Panc1 (cell line): ENCODE measurements at regions of chr6 and their contacts with region 1.

Region 1: GRCh38 chr6:112457886-112458285 is 110.8 kb downstream of the RFPL4B start:
- DNase-seq: no peak
- ATAC-seq: no peak
- H3K4me3 ChIP-seq: no peak overlapping the region
- H3K27ac ChIP-seq: no peak overlapping the region
- H3K4me1 ChIP-seq: no peaks in the 10 kb centered on the region
- H3K27me3 ChIP-seq: no peaks in the 10 kb centered on the region
- CTCF ChIP-seq: no peak

Region 2: GRCh38 chr6:113149511-113149910 is 691.6 kb after region 1 on chr6:
- CTCF ChIA-PET with region 1: no interaction called
- POLR2A ChIA-PET with region 1: interaction called, 12 read pairs
- in situ Hi-C with region 1: no loop called
- intact Hi-C with region 1: no loop called
- DNase-seq: no peak
- ATAC-seq: no peak
- H3K4me3 ChIP-seq: no peak overlapping the region
- H3K27ac ChIP-seq: no peak overlapping the region
- H3K4me1 ChIP-seq: no peaks in the 10 kb centered on the region
- H3K27me3 ChIP-seq: no peaks in the 10 kb centered on the region
- CTCF ChIP-seq: no peak